ENCODE measurements at regions of chr16 and their contacts with region 1.

Region 1: GRCh38 chr16:79587296-79587695 is 13.2 kb downstream of the MAF start:
- DNase-seq: no peak
- H3K4me3 ChIP-seq: no peak overlapping the region
- H3K27ac ChIP-seq: no peak overlapping the region
- H3K4me1 ChIP-seq: no peaks in the 10 kb centered on the region
- H3K27me3 ChIP-seq: no peaks in the 10 kb centered on the region
- CTCF ChIP-seq: no peak
- EP300 ChIP-seq: no peak
- RAD21 ChIP-seq: no peak

Region 2: DNA sequence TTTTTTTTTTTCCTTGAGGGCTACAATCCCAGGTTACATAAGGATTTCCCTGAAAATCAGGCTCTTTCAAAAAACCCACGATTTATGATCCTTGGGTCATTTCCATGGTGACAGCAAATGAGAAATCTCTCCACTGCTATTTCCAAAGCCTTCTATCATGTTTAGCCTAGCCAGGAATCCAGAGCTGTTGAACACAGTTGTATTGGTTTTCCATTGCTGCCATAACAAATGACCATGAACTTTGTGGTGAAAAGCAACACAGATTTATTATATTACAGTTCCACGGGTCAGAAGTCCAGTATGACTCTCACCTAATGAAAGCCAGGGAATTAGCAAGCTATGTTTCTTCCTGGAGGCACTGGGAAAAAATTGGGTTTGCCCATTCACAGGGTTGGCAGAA is 93.4 kb before region 1 on chr16:
- CTCF ChIA-PET with region 1: no interaction called
- POLR2A ChIA-PET with region 1: no interaction called
- DNase-seq: no peak
- H3K4me3 ChIP-seq: no peak overlapping the region
- H3K27ac ChIP-seq: no peak overlapping the region
- H3K4me1 ChIP-seq: no peaks in the 10 kb centered on the region
- H3K27me3 ChIP-seq: no peaks in the 10 kb centered on the region
- CTCF ChIP-seq: no peak
- EP300 ChIP-seq: no peak
- RAD21 ChIP-seq: no peak

Region 3: GRCh38 chr16:79601931-79602627 is 14.8 kb after region 1 on chr16:
- CTCF ChIA-PET with region 1: interaction called, 12 read pairs
- POLR2A ChIA-PET with region 1: no interaction called
- DNase-seq: peak; percentile 60
- H3K4me3 ChIP-seq: peak overlapping the region; percentile 47 to 65; a peak in 3 of 4 replicates
- H3K27ac ChIP-seq: no peak overlapping the region
- H3K4me1 ChIP-seq: peaks cover 6 to 22% of the 10 kb centered on the region in 2 experiments; a peak in 3 of 4 replicates
- H3K27me3 ChIP-seq: peaks cover 19% of the 10 kb centered on the region; the same call in 1 of the 2 replicates
- CTCF ChIP-seq: peak; percentile 86
- EP300 ChIP-seq: no peak
- RAD21 ChIP-seq: peak; percentile 83